HEK293T (cell line): ENCODE measurements at regions of chr11 and their contacts with region 1.

Region 1: DNA sequence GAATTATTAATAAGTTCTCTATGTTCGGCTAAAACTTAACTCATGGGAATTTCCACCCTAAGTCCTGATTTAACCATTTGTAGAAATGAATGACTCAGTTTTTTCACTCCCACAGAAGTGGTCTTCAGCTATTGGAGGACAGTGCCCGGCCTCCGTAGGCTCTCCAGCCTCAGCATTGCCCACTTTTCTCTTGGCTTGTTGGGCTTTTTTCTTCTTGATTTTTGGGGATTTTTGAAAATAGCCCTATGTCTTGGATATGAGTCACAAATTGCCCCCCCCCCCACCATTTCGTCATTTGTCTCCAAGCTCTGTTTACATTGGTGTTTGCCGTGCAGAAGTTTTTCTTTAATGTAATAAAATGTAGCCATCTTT is 66.7 kb downstream of the PACS1 start:
- DNase-seq: no peak

Region 2: GRCh38 chr11:66119348-66120133 is 17.2 kb before region 1 on chr11:
- CTCF ChIA-PET with region 1: interaction called, 11 read pairs
- POLR2A ChIA-PET with region 1: interaction called, 7 read pairs
- DNase-seq: no peak